ENCODE measurements at regions of chr18 and their contacts with region 1.

Region 1: GRCh38 chr18:9814431-9814830 is 71.3 kb upstream of the TXNDC2 start:
- DNase-seq: no peak

Region 2: DNA sequence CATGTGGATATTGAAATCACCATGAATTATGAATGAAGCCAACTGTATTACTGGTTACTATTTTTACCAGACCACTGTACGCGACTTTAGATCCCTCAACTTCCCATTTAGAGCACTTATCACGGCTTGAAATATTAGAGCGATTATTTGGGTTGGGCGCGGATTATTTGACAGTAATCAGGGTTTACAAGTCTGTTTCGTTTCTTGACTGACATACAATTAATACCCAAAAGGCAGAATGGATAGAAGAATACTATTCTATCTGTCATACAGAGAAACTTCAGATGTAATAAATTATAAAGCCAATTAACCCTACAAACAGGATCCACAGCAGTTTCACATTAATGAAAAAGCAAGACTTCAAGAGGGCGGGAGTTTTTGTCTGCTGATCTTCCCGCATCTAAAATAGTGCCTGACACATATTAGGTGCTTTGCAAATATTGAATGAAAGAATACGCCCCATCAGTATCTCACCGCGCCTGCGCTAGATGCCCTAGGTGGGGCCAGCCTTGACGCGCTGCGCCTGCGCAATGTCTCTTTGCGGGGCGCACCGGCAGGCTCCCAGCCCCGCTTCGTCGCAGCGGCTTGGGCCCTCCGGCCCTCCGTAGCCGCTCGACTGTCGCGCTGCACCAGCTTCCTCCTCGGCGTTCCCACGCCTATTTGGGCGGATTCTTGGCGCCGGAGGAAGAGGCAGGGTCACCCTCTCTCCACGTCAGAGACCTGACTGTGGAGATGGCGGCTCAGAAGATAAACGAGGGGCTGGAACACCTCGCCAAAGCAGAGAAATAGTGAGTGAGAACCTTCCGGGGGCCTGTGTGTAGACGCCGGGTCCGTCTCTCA is 711.2 kb after region 1 on chr18 and contains the start of gene NAPG:
- intact Hi-C with region 1: loop called in 1 of 2 experiments (anchors 10 kb)
- DNase-seq: peak; percentile 98
- total RNA-seq, gene NAPG: 29.4 to 43.0 TPM

Region 3: GRCh38 chr18:11310476-11311086 is 1496.2 kb after region 1 on chr18:
- intact Hi-C with region 1: no loop called
- DNase-seq: no peak

Measured in posterior vena cava (tissue), 2 donors.